ENCODE measurements at regions of chr11 and their contacts with region 1.

Region 1: DNA sequence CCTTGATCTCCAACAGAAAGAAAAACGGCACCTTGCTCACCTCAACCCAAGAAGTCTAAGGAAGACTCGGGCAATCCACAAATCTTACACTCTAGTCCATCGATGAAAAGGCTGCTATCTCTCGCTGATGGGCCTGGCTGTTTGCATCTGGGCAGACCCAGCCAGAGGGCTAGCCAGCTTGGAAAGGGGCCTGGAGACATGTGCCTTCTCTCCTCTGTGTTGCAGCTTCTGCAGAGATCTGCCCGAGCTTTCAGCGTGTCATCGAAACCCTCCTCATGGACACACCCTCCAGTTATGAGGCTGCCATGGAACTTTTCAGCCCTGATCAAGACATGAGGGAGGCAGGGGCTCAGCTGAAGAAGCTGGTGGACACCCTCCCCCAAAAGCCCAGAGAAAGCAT is 3.2 kb downstream of the SCGB1A1 start:
- DNase-seq: no peak
- ATAC-seq: no peak
- H3K4me3 ChIP-seq: no peak overlapping the region
- H3K27ac ChIP-seq: no peak overlapping the region
- H3K4me1 ChIP-seq: peaks cover 4 to 21% of the 10 kb centered on the region in 2 donors
- H3K27me3 ChIP-seq: no peaks in the 10 kb centered on the region
- CTCF ChIP-seq: no peak

Region 2: DNA sequence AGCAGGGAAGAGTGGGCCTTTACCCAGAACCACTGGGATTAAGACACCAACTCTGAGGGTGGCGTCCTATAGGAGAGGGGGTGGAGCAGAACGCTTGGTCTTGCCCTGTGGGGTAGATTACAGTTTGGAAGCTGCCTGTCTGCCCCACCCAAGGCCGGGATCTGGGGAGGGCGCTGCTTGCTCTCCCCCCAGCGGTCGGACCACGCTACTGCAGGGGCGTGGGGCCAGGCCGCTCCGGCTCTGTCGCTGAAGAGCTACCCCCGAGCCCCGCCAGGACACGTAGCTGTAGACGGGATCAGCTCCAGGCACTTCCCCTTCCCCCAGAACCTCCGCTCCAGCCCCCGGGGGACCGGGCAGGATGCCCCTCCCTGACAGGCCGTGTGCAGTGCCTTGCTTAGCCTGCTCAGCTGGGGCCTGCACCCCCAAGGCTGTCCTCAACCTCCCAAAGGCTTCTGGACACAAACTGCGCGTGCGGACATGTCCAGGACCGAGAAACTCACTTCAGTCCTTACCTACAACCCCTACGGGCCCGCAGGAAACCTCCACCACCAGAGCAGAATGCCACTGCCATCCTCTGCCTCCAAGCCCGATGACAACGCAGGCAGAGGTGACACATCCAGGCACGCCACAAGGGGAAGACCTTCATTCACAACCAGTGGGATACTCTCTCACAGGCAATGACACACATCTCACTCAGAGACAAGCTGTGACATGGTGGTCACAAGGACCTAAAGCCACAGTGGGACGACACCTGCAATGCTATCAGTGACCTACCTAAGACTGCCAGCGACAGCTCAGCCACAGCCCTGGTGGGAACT is 121.0 kb after region 1 on chr11:
- intact Hi-C with region 1: loop called in 1 of 2 experiments (anchors 5 kb)
- DNase-seq: peak; percentile 77 to 95 (median 84)
- ATAC-seq: peak; percentile 54
- H3K4me3 ChIP-seq: peak overlapping the region; percentile 83 to 95
- H3K27ac ChIP-seq: peak overlapping the region; percentile 94 to 96
- H3K4me1 ChIP-seq: peaks cover 71 to 81% of the 10 kb centered on the region in 2 donors
- H3K27me3 ChIP-seq: peaks cover 0 to 43% of the 10 kb centered on the region in 2 donors
- CTCF ChIP-seq: peak; percentile 97 to 99